ENCODE measurements at regions of chr11 and their contacts with region 1.

Region 1: DNA sequence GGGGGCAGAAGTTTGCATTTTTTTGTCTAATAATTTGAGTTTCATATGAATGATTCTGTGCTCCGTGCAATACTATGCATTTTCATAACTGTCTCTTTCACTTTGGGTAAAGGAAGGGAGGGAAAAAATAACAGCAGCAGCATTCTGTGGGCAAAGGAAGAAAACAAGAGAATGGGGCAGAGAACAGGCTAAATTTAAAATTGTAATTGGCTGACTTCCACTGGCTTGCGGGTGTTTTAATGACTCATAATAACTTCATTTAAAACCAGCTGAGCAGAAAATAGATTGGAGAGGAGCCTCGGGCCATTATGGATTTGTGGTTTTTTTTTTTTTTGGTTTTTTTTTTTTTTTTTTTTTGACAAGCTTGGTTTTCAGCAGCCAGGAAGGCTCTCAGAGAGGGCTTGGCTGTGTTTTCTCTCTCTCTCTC is 107.4 kb downstream of the ZBTB16 start:
- DNase-seq: peak; percentile 83
- H3K4me3 ChIP-seq: no peak overlapping the region
- H3K27ac ChIP-seq: no peak overlapping the region
- H3K4me1 ChIP-seq: peaks cover 37% of the 10 kb centered on the region
- H3K27me3 ChIP-seq: peaks cover 11% of the 10 kb centered on the region
- CTCF ChIP-seq: no peak

Region 2: DNA sequence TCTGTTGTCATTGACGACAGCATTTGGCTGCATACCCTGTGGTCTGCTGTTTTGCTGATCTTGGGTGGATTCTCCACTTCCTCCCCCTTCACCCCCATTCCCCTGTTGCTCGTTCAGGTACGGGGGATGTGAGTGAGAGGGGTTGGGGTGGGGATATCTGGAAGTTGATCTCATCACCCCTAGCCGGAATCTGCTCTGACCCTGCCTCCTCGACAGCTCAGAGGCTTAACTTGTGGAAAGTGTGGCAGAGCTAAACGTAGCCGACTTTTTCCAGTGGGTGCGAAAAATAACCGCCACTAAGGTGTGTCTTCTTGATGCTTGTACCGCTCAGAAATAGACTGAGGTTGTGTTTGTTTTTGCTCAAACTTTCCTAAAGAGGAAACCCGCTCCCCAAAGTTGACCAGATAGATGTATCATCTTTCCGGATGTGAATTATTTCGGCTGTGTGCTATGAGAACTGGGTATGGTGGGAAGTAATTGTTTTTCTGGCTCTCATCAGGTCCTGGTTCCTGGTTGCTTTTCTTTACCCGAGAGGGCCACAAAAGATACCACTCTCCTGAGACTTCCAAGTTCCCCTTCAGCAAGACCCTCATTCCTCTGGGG is 100.8 kb before region 1 on chr11:
- CTCF ChIA-PET with region 1: no interaction called
- dilution Hi-C with region 1: loop called (anchors 5 kb)
- in situ Hi-C with region 1: loop called in 1 of 2 experiments (anchors 10 kb)
- intact Hi-C with region 1: loop called (anchors 10 kb)
- DNase-seq: no peak
- H3K4me3 ChIP-seq: no peak overlapping the region
- H3K27ac ChIP-seq: no peak overlapping the region
- H3K4me1 ChIP-seq: no peaks in the 10 kb centered on the region
- H3K27me3 ChIP-seq: peaks cover 12% of the 10 kb centered on the region
- CTCF ChIP-seq: no peak

Region 3: GRCh38 chr11:114110952-114111947 is 55.7 kb before region 1 on chr11:
- CTCF ChIA-PET with region 1: no interaction called
- dilution Hi-C with region 1: loop called (anchors 5 kb)
- in situ Hi-C with region 1: no loop called
- intact Hi-C with region 1: no loop called
- DNase-seq: peak; percentile 4
- H3K4me3 ChIP-seq: no peak overlapping the region
- H3K27ac ChIP-seq: no peak overlapping the region
- H3K4me1 ChIP-seq: no peaks in the 10 kb centered on the region
- H3K27me3 ChIP-seq: peaks cover 11% of the 10 kb centered on the region
- CTCF ChIP-seq: no peak

Region 4: GRCh38 chr11:114134870-114135269 is 32.0 kb before region 1 on chr11:
- CTCF ChIA-PET with region 1: no interaction called
- dilution Hi-C with region 1: no loop called
- in situ Hi-C with region 1: no loop called
- intact Hi-C with region 1: loop called (anchors 5 kb)
- DNase-seq: peak; percentile 66
- H3K4me3 ChIP-seq: no peak overlapping the region
- H3K27ac ChIP-seq: no peak overlapping the region
- H3K4me1 ChIP-seq: peaks cover 15% of the 10 kb centered on the region
- H3K27me3 ChIP-seq: no peaks in the 10 kb centered on the region
- CTCF ChIP-seq: no peak

Region 5: DNA sequence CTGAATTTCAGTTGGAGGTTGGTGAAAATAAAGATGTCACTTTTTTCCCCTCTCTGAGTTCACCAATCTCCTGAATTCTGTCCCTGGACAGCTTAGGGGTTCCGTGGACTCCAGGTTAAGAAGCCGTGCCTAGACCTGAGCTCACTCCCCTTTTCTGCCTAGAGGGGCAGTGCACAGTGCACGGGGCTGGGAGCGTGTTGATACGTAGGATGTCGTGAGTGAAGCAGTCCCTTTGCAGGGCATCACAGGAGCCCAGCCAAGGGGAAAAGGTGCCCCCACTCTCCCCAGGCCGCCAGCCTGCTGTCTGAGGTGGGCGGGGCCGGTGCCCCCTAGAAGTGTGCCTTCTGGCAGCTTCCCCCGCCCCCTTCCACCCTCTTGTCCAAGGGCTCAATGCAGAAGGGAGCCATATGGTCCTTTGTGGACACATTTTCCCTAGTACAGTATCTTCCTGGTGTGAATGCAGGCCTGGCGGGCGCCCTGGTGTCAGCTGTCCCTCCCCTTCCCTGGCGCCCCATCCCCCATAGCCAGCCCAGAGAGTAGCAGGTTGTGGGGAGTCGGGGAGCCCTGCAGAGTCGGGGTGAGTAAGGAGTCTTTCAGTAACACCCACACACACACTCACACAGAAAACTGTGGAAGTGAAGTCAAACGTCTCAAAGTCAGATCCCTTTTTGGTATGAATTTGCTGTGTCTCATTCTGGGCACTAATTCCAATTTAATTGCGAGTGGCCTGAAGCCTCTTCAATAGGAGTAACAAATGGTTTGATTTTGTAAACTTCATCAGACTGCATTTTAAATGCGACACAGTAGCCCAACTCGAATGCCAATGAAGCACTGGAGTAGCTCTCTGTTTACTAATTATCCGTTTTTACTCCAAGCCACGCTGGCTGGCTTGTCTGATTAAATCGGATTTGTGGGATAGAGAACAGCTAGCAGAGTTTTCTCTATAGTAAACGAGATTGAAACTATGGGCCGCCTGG is 61.8 kb after region 1 on chr11:
- CTCF ChIA-PET with region 1: no interaction called
- dilution Hi-C with region 1: no loop called
- in situ Hi-C with region 1: no loop called
- intact Hi-C with region 1: no loop called
- DNase-seq: no peak
- H3K4me3 ChIP-seq: no peak overlapping the region
- H3K27ac ChIP-seq: no peak overlapping the region
- H3K4me1 ChIP-seq: no peaks in the 10 kb centered on the region
- H3K27me3 ChIP-seq: peaks cover 4% of the 10 kb centered on the region
- CTCF ChIP-seq: no peak

Measured in mammary epithelial cell (primary cell).